ENCODE measurements at regions of chr3 and their contacts with region 1.

Region 1: GRCh38 chr3:28328188-28329151 is 20.1 kb upstream of the ZCWPW2 start:
- DNase-seq: peak in 2 of 5 donors; percentile 41 to 49
- H3K4me3 ChIP-seq: no peak overlapping the region
- H3K4me3 Mint-ChIP-seq: peak overlapping the region in 4 of 7 donors; percentile 19 to 54 (median 40)
- H3K27ac ChIP-seq: no peak overlapping the region
- H3K27ac Mint-ChIP-seq: peak overlapping the region in 4 of 8 donors; percentile 35 to 81 (median 52)
- H3K4me1 ChIP-seq: peaks cover 24% of the 10 kb centered on the region
- H3K4me1 Mint-ChIP-seq: peaks cover 41 to 58% (median 57%) of the 10 kb centered on the region in 3 donors
- H3K27me3 ChIP-seq: no peaks in the 10 kb centered on the region
- H3K27me3 Mint-ChIP-seq: no peaks in the 10 kb centered on the region

Region 2: DNA sequence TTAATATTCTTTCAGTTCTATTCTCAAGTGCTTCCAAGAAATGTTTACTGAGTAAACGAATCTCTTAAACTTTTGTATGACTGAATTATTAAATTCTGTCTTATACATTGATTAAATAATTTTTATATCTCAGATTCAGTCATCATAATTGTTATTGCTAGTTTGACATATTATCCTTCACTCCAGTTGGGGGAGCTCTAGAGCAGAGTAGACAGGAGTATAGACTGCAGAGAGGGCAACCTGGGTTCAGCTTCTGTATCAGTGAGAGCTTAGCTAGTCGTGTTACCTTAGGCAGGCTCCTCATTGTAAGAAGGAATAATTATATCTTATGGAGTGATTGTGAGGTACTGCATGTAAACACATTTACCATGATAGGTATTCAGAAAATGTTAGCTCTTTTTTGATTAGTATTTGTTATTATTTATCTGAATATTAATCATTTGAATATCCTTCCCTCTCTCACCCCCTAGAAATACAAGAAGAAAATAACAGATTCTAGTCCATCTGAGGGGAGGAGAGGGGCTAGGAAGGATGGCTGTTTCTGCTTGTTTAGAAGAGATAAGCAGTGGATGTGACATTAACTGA is 10.9 kb before region 1 on chr3:
- CTCF ChIA-PET with region 1: interaction called, 28 read pairs
- POLR2A ChIA-PET with region 1: no interaction called
- DNase-seq: peak; percentile 10 to 54 (median 31)
- H3K4me3 ChIP-seq: no peak overlapping the region
- H3K4me3 Mint-ChIP-seq: peak overlapping the region in 1 of 7 donors; percentile 41
- H3K27ac ChIP-seq: no peak overlapping the region
- H3K27ac Mint-ChIP-seq: peak overlapping the region in 3 of 8 donors; percentile 22 to 66 (median 23)
- H3K4me1 ChIP-seq: peaks cover 5% of the 10 kb centered on the region
- H3K4me1 Mint-ChIP-seq: peaks cover 31 to 78% (median 62%) of the 10 kb centered on the region in 3 donors
- H3K27me3 ChIP-seq: no peaks in the 10 kb centered on the region
- H3K27me3 Mint-ChIP-seq: no peaks in the 10 kb centered on the region

Region 3: DNA sequence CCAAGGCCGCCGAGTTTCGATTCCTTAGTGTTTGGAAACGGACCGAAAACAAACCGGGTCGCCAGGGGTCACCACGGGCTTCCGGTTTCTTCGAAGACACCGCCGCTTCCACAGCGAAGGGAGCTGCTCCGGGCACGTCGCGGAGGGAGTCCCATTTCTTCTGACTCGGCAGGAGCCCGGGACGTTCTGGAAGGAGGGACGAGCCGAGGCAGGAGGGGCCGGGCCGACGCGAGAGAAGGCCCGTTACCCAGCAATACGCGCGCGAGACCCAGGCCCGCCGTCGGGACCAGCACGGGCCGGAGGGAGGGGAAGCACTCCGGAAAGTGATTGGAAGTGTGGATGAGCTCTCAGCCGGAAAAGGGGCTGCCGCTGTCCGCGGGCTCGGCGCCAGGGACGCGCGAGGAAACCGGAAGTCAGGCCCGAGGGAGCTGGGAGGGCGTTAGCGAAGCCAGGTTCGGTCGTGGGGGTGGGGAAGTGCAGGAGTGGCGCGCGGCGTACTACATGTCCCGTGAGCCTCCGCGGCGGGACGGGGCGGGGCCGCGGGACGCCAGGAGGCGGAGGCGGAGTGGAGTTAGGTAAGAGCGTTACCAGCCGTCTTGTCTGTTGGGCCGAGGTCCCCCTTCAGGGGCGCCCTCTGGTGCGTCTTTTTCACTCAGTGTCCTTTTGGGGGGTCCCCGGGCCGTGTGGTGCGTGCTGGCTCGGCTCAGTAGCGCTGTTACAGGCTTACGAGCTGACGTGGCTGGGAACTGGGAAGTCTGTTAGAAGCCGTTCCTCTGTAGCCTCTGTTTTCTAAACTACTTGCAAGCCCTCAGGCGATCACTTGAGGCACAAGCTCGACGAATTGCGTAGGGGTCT is 20.4 kb after region 1 on chr3 and contains the starts of genes AZI2 and ZCWPW2:
- CTCF ChIA-PET with region 1: interaction called, 9 read pairs
- POLR2A ChIA-PET with region 1: interaction called, 13 read pairs
- DNase-seq: peak; percentile 87 to 95 (median 90)
- H3K4me3 ChIP-seq: peak within 1 kb of the TSS; percentile 92
- H3K4me3 Mint-ChIP-seq: peak within 1 kb of the TSS; percentile 96 to 100 (median 98)
- H3K27ac ChIP-seq: peak within 1 kb of the TSS; percentile 97
- H3K27ac Mint-ChIP-seq: peak within 1 kb of the TSS; percentile 95 to 100 (median 99)
- H3K4me1 ChIP-seq: peaks cover 34% of the 10 kb centered on the region
- H3K4me1 Mint-ChIP-seq: peaks cover 55 to 74% (median 68%) of the 10 kb centered on the region in 3 donors
- H3K27me3 ChIP-seq: no peaks in the 10 kb centered on the region
- H3K27me3 Mint-ChIP-seq: no peaks in the 10 kb centered on the region
- total RNA-seq, gene AZI2: 34.5 to 36.4 TPM
- total RNA-seq, gene ZCWPW2: 0.20 to 0.27 TPM